PC-3 (cell line): ENCODE measurements at regions of chr10 and their contacts with region 1.

Region 1: DNA sequence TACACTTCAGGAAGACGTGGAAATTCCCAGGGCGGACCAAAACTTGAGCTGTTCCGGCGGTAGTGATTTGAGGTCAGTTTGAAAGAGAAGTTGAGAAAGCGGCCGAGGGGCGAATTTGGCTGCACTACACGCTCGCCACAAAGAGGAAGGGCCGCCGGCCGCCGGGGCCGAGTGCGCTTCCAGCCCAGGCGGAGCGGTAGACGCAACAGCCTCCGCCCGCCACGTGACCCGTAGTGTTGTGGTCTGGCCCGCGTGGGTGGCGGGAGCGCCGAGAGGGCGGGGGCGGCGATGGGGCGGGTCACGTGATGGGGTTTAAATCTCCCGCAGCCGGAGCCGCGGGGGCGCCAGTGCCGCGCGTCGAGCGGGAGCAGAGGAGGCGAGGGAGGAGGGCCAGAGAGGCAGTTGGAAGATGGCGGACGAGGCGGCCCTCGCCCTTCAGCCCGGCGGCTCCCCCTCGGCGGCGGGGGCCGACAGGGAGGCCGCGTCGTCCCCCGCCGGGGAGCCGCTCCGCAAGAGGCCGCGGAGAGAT is at the start of gene SIRT1:
- DNase-seq: peak; percentile 99
- ATAC-seq: peak; percentile 77
- H3K4me3 ChIP-seq: peak within 1 kb of the TSS; percentile 75
- H3K27ac ChIP-seq: peak within 1 kb of the TSS; percentile 43
- H3K4me1 ChIP-seq: peaks cover 16% of the 10 kb centered on the region
- H3K27me3 ChIP-seq: no peaks in the 10 kb centered on the region
- CTCF ChIP-seq: 0 out of 2 replicates have a peak, but pooled peaks have one; percentile 21
- total RNA-seq, gene SIRT1: 20.4 and 20.8 TPM in 2 replicates

Region 2: DNA sequence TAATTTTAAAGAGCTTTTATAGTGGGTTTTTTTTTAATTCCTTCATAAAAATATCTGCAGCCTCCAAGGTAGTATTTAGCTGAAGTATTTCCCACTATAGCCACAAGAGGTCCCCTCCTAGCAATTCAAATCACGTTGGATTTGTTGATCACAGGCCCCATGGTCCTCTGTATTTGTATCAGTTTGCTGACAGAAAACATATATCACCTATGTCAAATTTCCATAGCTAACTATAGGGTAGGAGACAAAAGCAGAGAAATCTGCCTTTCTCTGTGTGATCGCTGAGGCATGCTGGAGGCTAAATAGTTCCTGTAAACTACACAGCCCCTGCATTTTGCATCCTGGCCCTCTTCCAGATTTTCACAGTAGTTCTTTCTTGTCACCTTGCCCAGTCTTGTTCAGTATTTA is 186.6 kb before region 1 on chr10:
- CTCF ChIA-PET with region 1: no interaction called
- POLR2A ChIA-PET with region 1: no interaction called
- intact Hi-C with region 1: loop called (anchors 10 kb)
- DNase-seq: peak; percentile 88
- ATAC-seq: peak; percentile 100
- H3K4me3 ChIP-seq: no peak overlapping the region
- H3K27ac ChIP-seq: no peak overlapping the region
- H3K4me1 ChIP-seq: no peaks in the 10 kb centered on the region
- H3K27me3 ChIP-seq: peaks cover 46% of the 10 kb centered on the region
- CTCF ChIP-seq: peak; percentile 88

Region 3: DNA sequence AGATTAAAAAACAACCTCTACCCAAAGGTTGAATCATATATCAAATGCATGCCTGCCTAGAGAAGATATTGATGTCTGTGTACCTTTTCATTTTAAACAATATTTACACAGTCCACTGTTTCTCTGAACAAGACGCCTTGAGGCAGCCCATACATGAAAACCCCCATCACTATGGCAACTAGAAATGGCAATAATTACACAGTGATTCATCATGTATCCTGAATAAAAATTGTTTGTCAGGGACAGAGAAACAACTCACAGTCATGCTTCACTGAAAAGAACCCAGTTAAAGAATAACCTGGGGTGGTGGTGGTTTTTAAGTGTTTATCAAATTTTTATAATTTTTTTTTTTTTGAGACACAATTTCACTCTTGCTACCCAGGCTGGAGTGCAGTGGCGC is 66.1 kb before region 1 on chr10:
- CTCF ChIA-PET with region 1: no interaction called
- POLR2A ChIA-PET with region 1: interaction called, 16 read pairs
- intact Hi-C with region 1: loop called (anchors 1 kb)
- DNase-seq: peak; percentile 100
- ATAC-seq: peak; percentile 75
- H3K4me3 ChIP-seq: peak overlapping the region; percentile 19; the same call in 1 of the 2 replicates
- H3K27ac ChIP-seq: peak overlapping the region; percentile 91
- H3K4me1 ChIP-seq: peaks cover 70% of the 10 kb centered on the region
- H3K27me3 ChIP-seq: no peaks in the 10 kb centered on the region
- CTCF ChIP-seq: no peak

Region 4: DNA sequence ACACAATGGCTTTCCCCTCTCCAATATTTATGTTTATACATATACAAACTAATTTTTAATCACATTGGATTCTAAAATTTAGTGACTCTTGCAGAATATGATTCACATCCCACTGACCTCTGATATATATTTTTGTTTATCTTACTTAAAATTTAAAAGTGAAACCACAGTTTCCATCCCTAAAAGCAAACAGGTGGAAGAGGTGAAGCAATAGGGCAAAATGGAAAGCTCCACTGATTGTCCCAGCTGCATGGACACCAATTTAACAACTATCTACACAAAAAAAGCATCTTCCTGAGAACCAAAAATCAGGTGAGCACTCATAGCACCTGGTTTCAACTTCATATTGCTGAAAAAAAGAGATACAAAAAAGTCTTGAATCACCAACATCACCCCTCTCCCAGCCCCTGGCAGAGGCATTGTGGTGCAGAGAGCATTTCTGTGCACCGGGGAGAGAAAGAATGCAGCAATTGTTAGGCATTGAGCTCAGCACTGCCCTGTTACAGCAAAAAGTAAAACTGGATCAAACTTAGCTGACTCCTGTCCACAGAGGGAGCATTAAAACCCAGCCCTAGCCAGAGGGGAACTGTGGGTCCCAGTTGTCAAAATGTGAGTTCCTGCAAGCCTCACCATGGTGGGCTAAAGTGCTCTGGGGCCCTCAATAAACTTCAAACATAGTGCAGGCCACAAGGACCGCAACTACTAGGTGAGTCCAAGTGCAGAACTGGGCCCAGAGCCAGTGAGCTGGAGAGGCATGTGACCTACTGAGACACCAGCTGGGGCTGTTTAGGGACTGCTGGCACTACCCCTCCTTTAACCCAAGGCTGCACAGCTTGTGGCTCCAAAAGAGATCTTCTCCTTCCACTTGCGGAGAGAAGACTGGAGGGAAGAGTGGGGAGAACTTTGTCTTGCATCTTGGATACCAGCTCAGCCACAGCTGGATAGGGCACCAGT is 92.2 kb after region 1 on chr10:
- CTCF ChIA-PET with region 1: no interaction called
- POLR2A ChIA-PET with region 1: no interaction called
- intact Hi-C with region 1: loop called (anchors 1 kb)
- DNase-seq: peak; percentile 21
- ATAC-seq: peak; percentile 49
- H3K4me3 ChIP-seq: no peak overlapping the region
- H3K27ac ChIP-seq: no peak overlapping the region
- H3K4me1 ChIP-seq: peaks cover 24% of the 10 kb centered on the region
- H3K27me3 ChIP-seq: no peaks in the 10 kb centered on the region
- CTCF ChIP-seq: no peak

Region 5: GRCh38 chr10:68067029-68067428 is 182.7 kb after region 1 on chr10:
- CTCF ChIA-PET with region 1: no interaction called
- POLR2A ChIA-PET with region 1: interaction called, 27 read pairs
- intact Hi-C with region 1: no loop called
- DNase-seq: no peak
- ATAC-seq: no peak
- H3K4me3 ChIP-seq: no peak overlapping the region
- H3K27ac ChIP-seq: no peak overlapping the region
- H3K4me1 ChIP-seq: peaks cover 31% of the 10 kb centered on the region
- H3K27me3 ChIP-seq: no peaks in the 10 kb centered on the region
- CTCF ChIP-seq: no peak

Region 6: DNA sequence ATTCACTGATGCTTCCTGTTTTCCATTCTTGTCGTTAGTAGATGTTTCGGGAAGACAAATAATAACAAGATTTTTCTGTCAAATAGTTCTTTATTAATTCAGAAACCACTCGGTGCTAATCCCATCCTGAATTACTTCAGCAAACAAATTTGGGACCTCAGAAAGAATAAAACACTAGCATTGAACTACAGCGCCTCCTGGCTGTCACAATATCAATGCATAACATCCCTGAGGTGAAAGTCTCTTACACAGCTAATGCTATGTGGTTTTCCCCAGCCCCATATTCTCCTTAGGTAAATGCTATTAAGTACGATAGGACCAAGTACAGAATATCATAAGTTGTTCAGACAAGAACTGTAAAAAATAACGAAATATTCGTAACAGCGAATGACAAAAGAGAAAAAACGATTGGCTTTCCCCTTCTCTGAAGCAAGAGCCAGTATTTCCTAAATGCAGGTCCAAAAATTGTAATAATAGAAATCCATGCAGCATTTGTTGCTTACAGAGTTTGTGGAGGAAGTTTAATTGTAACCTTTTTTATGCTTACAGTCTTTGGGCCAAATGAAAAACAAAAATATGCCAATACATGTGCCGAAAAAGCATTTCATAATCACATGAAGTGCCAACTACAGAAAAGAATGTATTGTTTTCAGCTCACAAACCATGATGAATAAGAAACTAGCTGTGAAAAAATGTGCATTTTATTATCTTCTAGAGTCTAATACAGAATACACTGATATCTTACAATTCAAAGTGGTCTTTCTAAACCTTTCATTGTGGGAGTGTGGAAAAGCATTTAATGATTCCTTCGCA is 272.2 kb after region 1 on chr10:
- CTCF ChIA-PET with region 1: no interaction called
- POLR2A ChIA-PET with region 1: no interaction called
- intact Hi-C with region 1: loop called (anchors 10 kb)
- DNase-seq: peak; percentile 97
- ATAC-seq: peak; percentile 46
- H3K4me3 ChIP-seq: no peak overlapping the region
- H3K27ac ChIP-seq: peak overlapping the region; percentile 85
- H3K4me1 ChIP-seq: peaks cover 30% of the 10 kb centered on the region
- H3K27me3 ChIP-seq: no peaks in the 10 kb centered on the region
- CTCF ChIP-seq: peak; percentile 100